ENCODE measurements at regions of chr18 and their contacts with region 1.

Region 1: DNA sequence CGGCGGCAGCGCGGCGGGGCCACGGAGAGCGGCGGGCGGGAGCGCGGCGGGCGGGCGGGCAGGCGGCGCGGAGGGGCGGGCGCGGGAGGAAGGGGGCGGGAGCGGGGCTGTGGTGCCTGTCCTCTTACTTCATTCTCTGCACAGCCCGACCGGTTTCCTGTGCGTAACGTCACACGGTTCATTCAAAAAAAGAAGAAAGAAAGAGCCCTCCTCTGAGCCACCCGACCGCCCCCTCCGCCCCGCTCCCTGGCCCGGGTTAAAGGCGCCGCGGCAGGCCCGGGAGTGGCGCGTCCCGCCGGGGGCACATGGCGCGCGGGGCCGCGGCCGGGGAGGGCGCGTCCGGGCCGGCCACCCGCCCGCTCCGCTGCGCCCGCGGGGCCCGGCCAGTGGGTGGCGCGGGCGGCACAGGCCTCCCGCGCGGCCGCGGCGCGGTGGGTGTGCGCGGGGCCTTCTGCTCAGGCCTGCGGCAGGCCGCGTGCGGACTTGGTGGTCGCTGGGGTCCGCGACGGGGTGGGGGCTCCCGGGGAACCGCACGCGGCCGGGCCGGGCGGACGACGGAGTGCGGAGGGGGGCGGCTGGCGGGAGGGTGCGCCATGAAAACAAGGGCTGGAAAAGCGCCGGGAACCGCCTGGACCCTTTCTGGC is 599 bp upstream of the BCL2 start:
- DNase-seq: peak; percentile 87
- H3K4me3 Mint-ChIP-seq: peak overlapping the region; percentile 92
- H3K27ac Mint-ChIP-seq: peak overlapping the region; percentile 67
- H3K4me1 Mint-ChIP-seq: peaks cover 26% of the 10 kb centered on the region
- H3K27me3 Mint-ChIP-seq: no peaks in the 10 kb centered on the region

Region 2: GRCh38 chr18:63088262-63088661 is 231.9 kb before region 1 on chr18:
- CTCF ChIA-PET with region 1: no interaction called
- POLR2A ChIA-PET with region 1: no interaction called
- DNase-seq: no peak
- H3K4me3 Mint-ChIP-seq: no peak overlapping the region
- H3K27ac Mint-ChIP-seq: no peak overlapping the region
- H3K4me1 Mint-ChIP-seq: no peaks in the 10 kb centered on the region
- H3K27me3 Mint-ChIP-seq: peaks cover 17% of the 10 kb centered on the region

Region 3: DNA sequence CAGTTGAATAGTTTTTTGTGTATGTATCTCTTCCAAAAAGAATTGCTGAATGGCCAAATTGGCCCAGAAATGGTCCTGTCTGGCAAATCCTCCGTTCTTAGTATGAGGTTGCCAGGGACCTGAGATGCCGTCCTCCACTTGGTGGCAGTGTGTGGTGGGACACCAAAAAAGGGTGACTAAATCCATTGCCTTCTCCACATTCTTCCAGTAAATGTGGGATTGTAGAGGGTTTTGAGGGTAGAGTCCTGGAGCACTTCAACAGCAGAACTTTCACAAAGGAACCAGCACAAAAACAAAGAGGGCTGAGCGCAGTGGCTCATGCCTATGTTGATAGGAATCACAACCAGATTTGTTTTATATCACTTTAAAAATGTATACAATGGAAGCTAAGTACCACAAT is 200.5 kb before region 1 on chr18:
- CTCF ChIA-PET with region 1: interaction called, 11 read pairs
- POLR2A ChIA-PET with region 1: interaction called, 3 read pairs
- DNase-seq: no peak
- H3K4me3 Mint-ChIP-seq: no peak overlapping the region
- H3K27ac Mint-ChIP-seq: no peak overlapping the region
- H3K4me1 Mint-ChIP-seq: peaks cover 1% of the 10 kb centered on the region
- H3K27me3 Mint-ChIP-seq: peaks cover 39% of the 10 kb centered on the region

Region 4: GRCh38 chr18:63155169-63155852 is 164.9 kb before region 1 on chr18:
- CTCF ChIA-PET with region 1: interaction called, 51 read pairs
- POLR2A ChIA-PET with region 1: interaction called, 54 read pairs
- DNase-seq: peak; percentile 77
- H3K4me3 Mint-ChIP-seq: peak overlapping the region; percentile 76
- H3K27ac Mint-ChIP-seq: peak overlapping the region; percentile 95
- H3K4me1 Mint-ChIP-seq: peaks cover 97% of the 10 kb centered on the region
- H3K27me3 Mint-ChIP-seq: no peaks in the 10 kb centered on the region

Region 5: DNA sequence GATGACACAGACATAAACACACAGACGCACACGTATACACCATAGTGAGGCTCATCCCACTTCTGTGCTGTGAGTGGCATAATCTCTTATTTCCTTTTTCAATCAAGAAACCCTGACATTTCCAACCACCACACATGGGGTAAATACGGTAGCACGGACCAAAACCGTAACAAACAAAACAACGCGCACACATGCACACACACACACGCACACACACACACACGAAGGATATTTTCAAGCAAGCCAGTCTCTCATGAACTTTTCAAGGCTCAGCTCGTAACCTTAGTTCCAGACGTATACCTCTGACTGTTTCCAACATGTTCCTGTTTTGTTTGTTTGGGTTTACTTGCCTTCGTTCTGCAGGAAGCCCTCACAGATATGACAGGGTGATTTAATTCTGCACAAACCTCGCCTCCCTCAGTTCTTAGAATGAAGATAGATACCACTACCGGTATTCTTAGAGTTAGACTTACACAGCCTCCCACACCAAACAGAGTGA is 120.4 kb before region 1 on chr18:
- CTCF ChIA-PET with region 1: interaction called, 26 read pairs
- POLR2A ChIA-PET with region 1: interaction called, 85 read pairs
- DNase-seq: peak; percentile 59
- H3K4me3 Mint-ChIP-seq: no peak overlapping the region
- H3K27ac Mint-ChIP-seq: no peak overlapping the region
- H3K4me1 Mint-ChIP-seq: peaks cover 48% of the 10 kb centered on the region
- H3K27me3 Mint-ChIP-seq: no peaks in the 10 kb centered on the region

Region 6: GRCh38 chr18:63224630-63225029 is 95.5 kb before region 1 on chr18:
- CTCF ChIA-PET with region 1: interaction called, 10 read pairs
- POLR2A ChIA-PET with region 1: interaction called, 5 read pairs
- DNase-seq: no peak
- H3K4me3 Mint-ChIP-seq: no peak overlapping the region
- H3K27ac Mint-ChIP-seq: peak overlapping the region; percentile 44
- H3K4me1 Mint-ChIP-seq: peaks cover 77% of the 10 kb centered on the region
- H3K27me3 Mint-ChIP-seq: no peaks in the 10 kb centered on the region

Region 7: GRCh38 chr18:63267975-63268721 is 52.0 kb before region 1 on chr18:
- CTCF ChIA-PET with region 1: interaction called, 19 read pairs
- POLR2A ChIA-PET with region 1: interaction called, 5 read pairs
- DNase-seq: no peak
- H3K4me3 Mint-ChIP-seq: peak overlapping the region; percentile 33
- H3K27ac Mint-ChIP-seq: peak overlapping the region; percentile 75
- H3K4me1 Mint-ChIP-seq: peaks cover 67% of the 10 kb centered on the region
- H3K27me3 Mint-ChIP-seq: no peaks in the 10 kb centered on the region

Region 8: GRCh38 chr18:63339920-63340484 is 19.8 kb after region 1 on chr18:
- CTCF ChIA-PET with region 1: interaction called, 10 read pairs
- POLR2A ChIA-PET with region 1: interaction called, 4 read pairs
- DNase-seq: peak; percentile 34
- H3K4me3 Mint-ChIP-seq: no peak overlapping the region
- H3K27ac Mint-ChIP-seq: no peak overlapping the region
- H3K4me1 Mint-ChIP-seq: peaks cover 7% of the 10 kb centered on the region
- H3K27me3 Mint-ChIP-seq: no peaks in the 10 kb centered on the region

Region 9: GRCh38 chr18:63518178-63519012 is 198.2 kb after region 1 on chr18:
- CTCF ChIA-PET with region 1: no interaction called
- POLR2A ChIA-PET with region 1: no interaction called
- DNase-seq: peak; percentile 63
- H3K4me3 Mint-ChIP-seq: no peak overlapping the region
- H3K27ac Mint-ChIP-seq: no peak overlapping the region
- H3K4me1 Mint-ChIP-seq: no peaks in the 10 kb centered on the region
- H3K27me3 Mint-ChIP-seq: peaks cover 36% of the 10 kb centered on the region

Region 10: DNA sequence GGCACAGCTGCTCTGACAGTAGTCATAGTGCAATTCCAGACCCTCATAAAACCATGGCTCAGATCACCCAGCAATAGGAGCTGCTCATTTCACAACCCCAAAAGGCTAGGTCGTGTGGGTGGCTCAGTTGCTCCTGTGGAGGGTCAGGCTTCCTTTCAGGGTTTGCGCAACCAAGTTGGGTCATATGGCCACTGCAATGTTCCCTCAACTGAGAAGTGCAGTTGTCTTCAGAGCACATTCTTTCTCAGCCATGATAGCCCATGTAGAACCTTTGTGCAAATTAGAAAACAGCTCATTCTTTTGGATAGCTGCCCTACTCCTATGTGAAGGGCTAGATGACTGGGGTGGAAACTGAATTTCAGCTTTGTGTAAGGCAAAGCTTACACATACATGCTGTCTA is 270.2 kb after region 1 on chr18:
- CTCF ChIA-PET with region 1: no interaction called
- POLR2A ChIA-PET with region 1: no interaction called
- DNase-seq: no peak
- H3K4me3 Mint-ChIP-seq: no peak overlapping the region
- H3K27ac Mint-ChIP-seq: no peak overlapping the region
- H3K4me1 Mint-ChIP-seq: no peaks in the 10 kb centered on the region
- H3K27me3 Mint-ChIP-seq: peaks cover 3% of the 10 kb centered on the region

Measured in activated CD4-positive, alpha-beta memory T cell treated with anti-CD3 and anti-CD28 coated beads, Interleukin-2, amount 10 ng/mL, durations not matched to agents 7 days and 5 days (primary cell).